Activated T-helper 1 cell treated with anti-CD3 and anti-CD28 coated beads, Interleukin-12 subunit alpha, Interleukin-12 subunit beta, Interleukin-2, Interleukin-4 antibody, amounts not matched to agents 30 ng/mL and 10 ng/mL and 1 ng/mL, durations not matched to agents 14 hours and 24 hours and 36 hours (primary cell): ENCODE measurements at regions of chr1 and their contacts with region 1.

Region 1: GRCh38 chr1:168466092-168466713 is 77.6 kb downstream of the XCL2 start:
- DNase-seq: peak; percentile 18
- H3K4me3 Mint-ChIP-seq: peak overlapping the region; percentile 30
- H3K27ac Mint-ChIP-seq: peak overlapping the region; percentile 71
- H3K4me1 Mint-ChIP-seq: peaks cover 67% of the 10 kb centered on the region
- H3K27me3 Mint-ChIP-seq: no peaks in the 10 kb centered on the region

Region 2: DNA sequence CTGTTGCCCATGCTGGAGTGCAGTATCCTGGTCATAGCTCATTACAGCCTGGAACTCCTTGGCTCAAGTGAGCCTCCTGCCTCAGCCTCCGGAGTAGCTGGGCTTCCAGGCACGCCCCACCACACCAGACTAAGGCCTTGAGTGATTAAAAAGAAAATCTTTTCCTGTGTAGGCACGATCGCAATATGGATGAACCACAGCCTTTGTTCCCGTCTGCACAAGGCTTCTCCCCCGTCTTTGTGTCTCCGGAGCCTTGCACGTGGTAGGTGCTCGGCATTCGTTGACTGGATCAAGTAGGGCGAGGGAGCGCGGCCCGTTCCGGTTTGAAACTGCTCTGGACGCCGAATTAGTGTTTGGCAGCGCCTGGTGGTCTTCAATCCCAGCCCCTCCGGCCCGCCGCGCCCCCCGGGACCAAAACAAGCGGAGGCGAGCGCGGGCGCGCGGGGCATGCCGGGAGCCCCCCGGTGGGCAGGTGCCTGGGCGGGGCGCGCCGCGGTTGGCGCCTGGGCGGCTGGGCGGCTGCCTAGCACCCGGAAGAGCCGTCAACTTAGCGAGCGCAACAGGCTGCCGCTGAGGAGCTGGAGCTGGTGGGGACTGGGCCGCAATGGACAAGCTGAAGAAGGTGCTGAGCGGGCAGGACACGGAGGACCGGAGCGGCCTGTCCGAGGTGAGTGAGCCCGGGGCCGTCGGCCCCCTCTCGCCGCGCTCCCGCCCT is 240.6 kb before region 1 on chr1 and contains the start of gene SFT2D2:
- intact Hi-C with region 1: loop called (anchors 5 kb)
- DNase-seq: peak; percentile 77
- H3K4me3 Mint-ChIP-seq: peak within 1 kb of the TSS; percentile 90
- H3K27ac Mint-ChIP-seq: peak within 1 kb of the TSS; percentile 87
- H3K4me1 Mint-ChIP-seq: peaks cover 61% of the 10 kb centered on the region
- H3K27me3 Mint-ChIP-seq: peaks cover 4% of the 10 kb centered on the region
- total RNA-seq, gene SFT2D2: 71.1 and 76.5 TPM in 2 replicates

Region 3: GRCh38 chr1:168439456-168440375 is 26.5 kb before region 1 on chr1:
- intact Hi-C with region 1: loop called (anchors 1 kb)
- DNase-seq: peak; percentile 78
- H3K4me3 Mint-ChIP-seq: peak overlapping the region; percentile 57
- H3K27ac Mint-ChIP-seq: no peak overlapping the region
- H3K4me1 Mint-ChIP-seq: peaks cover 52% of the 10 kb centered on the region
- H3K27me3 Mint-ChIP-seq: no peaks in the 10 kb centered on the region

Region 4: GRCh38 chr1:168520052-168520751 is 54.0 kb after region 1 on chr1:
- intact Hi-C with region 1: loop called (anchors 1 kb)
- DNase-seq: no peak
- H3K4me3 Mint-ChIP-seq: peak overlapping the region; percentile 55
- H3K27ac Mint-ChIP-seq: peak overlapping the region; percentile 81
- H3K4me1 Mint-ChIP-seq: peaks cover 57% of the 10 kb centered on the region
- H3K27me3 Mint-ChIP-seq: no peaks in the 10 kb centered on the region

Region 5: GRCh38 chr1:169091480-169091941 is 625.3 kb after region 1 on chr1:
- intact Hi-C with region 1: loop called (anchors 5 kb)
- DNase-seq: no peak
- H3K4me3 Mint-ChIP-seq: no peak overlapping the region
- H3K27ac Mint-ChIP-seq: no peak overlapping the region
- H3K4me1 Mint-ChIP-seq: peaks cover 12% of the 10 kb centered on the region
- H3K27me3 Mint-ChIP-seq: peaks cover 6% of the 10 kb centered on the region